Right ventricle myocardium inferior (tissue), 1 donor: ENCODE measurements at regions of chr18 and their contacts with region 1.

Region 1: DNA sequence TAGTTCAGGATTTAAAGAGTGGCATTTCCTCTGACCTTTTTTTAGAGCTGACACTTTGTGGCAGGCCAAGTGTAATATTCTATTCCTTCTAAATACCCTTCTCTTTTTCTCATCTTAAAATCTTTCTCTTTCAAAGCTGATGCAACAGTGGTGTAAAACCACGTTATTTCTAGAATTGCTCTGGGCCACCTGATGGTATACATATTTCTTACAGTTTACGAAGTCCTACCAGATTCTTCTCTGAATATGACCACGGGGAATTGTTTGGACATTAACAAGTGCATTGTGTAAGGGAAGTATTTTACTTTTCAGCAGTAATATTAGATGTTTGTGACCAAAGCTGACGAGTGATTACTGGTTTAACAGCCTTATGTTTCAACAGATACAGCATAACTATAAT is 109.9 kb downstream of the PTPRM start:
- DNase-seq: no peak
- ATAC-seq: no peak

Region 2: GRCh38 chr18:7749510-7749981 is 72.5 kb after region 1 on chr18:
- intact Hi-C with region 1: loop called (anchors 5 kb)
- DNase-seq: no peak
- ATAC-seq: peak; percentile 61